GM12878 (cell line): ENCODE measurements at regions of chr6 and their contacts with region 1.

Region 1: DNA sequence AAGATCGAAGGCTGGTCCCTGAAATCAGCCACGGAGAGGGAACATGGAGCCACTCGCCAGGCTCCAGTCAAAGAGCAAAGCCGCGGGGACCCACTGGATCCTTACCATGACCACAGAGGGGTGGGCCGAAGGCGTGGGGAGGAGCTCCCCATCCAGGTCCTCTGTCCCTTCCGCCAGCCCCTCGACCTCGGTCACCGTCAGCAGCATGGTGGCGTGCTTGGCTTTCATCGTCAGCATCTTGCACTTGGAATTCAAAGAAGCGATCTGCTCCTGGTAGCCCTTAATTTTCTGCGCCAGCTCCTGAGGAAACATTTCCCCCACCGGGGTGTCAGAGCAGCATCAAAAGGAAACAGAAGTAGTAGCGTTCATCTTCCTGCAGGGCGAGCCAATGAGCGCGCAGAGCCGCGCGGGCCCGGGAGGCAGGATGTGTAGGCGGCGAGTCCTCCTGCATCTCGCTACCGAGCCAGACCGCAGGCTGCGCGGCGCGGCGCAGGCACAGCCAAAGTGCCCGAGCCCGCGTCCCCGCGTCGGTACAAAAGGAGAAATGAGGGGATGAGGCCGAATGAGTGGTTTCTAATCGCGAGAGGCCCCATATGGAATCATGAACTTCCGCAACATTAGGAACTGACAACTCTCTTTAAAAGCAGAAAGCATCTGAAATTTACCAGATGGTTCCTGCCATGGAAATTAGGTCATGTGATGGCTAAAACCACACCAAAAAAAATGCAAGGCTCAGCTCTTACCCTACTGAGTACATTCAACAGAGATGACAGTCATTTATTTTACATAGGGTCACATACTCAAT is 335.2 kb downstream of the SYNE1 start:
- DNase-seq: peak; percentile 74
- ATAC-seq: peak; percentile 92
- H3K4me3 ChIP-seq: peak overlapping the region; percentile 72
- H3K27ac ChIP-seq: peak overlapping the region; percentile 84
- H3K4me1 ChIP-seq: peaks cover 6% of the 10 kb centered on the region
- H3K27me3 ChIP-seq: no peaks in the 10 kb centered on the region
- CTCF ChIP-seq: peak; percentile 51 to 56 (median 53)
- EP300 ChIP-seq: no peak; a peak in 2 of 4 replicates
- POLR2A ChIP-seq: peak; percentile 92
- RAD21 ChIP-seq: peak; percentile 50

Region 2: GRCh38 chr6:152316024-152316423 is 14.1 kb after region 1 on chr6:
- CTCF ChIA-PET with region 1: interaction called, 6 read pairs
- POLR2A ChIA-PET with region 1: interaction called, 4 read pairs
- RAD21 ChIA-PET with region 1: interaction called, 12 read pairs
- SMC1A ChIA-PET with region 1: interaction called, 25 read pairs
- in situ Hi-C with region 1: no loop called
- intact Hi-C with region 1: no loop called
- DNase-seq: no peak
- ATAC-seq: no peak
- H3K4me3 ChIP-seq: no peak overlapping the region
- H3K27ac ChIP-seq: no peak overlapping the region
- H3K4me1 ChIP-seq: peaks cover 9% of the 10 kb centered on the region
- H3K27me3 ChIP-seq: no peaks in the 10 kb centered on the region; a peak in 2 of 4 replicates
- CTCF ChIP-seq: no peak
- EP300 ChIP-seq: no peak
- POLR2A ChIP-seq: no peak
- RAD21 ChIP-seq: no peak